Upper lobe of right lung (tissue), 1 donor: ENCODE measurements at regions of chr19 and their contacts with region 1.

Region 1: GRCh38 chr19:29610563-29611271 is 4.6 kb downstream of the POP4 start:
- DNase-seq: peak; percentile 81
- ATAC-seq: peak; percentile 83
- H3K4me3 ChIP-seq: no peak overlapping the region
- H3K27ac ChIP-seq: no peak overlapping the region
- H3K4me1 ChIP-seq: peaks cover 5% of the 10 kb centered on the region
- H3K27me3 ChIP-seq: no peaks in the 10 kb centered on the region
- CTCF ChIP-seq: peak; percentile 86

Region 2: DNA sequence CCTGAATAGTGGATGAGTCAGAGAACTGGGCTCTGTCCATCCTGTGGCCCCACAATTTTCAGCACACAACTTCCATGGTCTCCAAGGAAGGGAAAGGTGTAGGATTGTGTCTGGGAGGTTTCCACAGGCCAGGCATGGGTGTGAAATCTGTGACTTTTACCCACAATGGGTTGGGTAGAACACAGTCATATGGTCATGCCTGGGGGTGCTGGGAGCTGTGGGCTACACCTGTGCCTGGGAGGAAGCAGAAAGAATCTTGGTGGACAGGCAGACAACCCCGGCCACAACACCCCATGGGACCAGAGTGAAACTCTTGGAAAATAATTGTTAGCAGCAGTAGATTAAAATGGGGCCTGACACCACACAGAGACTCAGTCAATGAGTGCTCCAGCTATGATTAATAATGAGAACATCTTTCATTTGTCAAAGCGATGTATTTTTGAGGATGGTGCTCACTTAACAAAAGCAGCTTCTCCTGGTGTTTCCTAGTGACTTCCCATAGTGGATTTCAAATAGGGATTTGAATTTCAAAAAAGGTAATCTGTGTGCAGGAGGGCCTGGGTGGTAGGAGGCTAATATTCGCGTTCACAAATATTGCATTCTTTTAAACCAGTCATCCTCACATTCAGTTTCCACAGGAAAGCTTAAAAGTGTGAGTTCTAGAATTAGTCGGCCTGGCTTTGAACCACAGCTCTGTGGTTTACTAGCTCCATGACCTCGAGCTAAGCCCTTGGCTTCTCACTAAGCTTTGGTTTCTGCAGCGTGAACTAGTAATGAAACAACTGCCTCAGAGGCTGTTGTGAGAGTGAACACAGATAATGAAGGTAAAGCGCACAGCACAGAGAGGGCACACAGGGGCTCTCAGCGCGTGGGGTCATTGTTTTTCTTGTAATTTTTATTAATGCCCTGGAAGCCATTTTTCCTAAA is 308.5 kb before region 1 on chr19:
- intact Hi-C with region 1: no loop called
- DNase-seq: peak; percentile 8
- ATAC-seq: no peak
- H3K4me3 ChIP-seq: no peak overlapping the region
- H3K27ac ChIP-seq: no peak overlapping the region
- H3K4me1 ChIP-seq: no peaks in the 10 kb centered on the region
- H3K27me3 ChIP-seq: peaks cover 16% of the 10 kb centered on the region
- CTCF ChIP-seq: no peak

Region 3: DNA sequence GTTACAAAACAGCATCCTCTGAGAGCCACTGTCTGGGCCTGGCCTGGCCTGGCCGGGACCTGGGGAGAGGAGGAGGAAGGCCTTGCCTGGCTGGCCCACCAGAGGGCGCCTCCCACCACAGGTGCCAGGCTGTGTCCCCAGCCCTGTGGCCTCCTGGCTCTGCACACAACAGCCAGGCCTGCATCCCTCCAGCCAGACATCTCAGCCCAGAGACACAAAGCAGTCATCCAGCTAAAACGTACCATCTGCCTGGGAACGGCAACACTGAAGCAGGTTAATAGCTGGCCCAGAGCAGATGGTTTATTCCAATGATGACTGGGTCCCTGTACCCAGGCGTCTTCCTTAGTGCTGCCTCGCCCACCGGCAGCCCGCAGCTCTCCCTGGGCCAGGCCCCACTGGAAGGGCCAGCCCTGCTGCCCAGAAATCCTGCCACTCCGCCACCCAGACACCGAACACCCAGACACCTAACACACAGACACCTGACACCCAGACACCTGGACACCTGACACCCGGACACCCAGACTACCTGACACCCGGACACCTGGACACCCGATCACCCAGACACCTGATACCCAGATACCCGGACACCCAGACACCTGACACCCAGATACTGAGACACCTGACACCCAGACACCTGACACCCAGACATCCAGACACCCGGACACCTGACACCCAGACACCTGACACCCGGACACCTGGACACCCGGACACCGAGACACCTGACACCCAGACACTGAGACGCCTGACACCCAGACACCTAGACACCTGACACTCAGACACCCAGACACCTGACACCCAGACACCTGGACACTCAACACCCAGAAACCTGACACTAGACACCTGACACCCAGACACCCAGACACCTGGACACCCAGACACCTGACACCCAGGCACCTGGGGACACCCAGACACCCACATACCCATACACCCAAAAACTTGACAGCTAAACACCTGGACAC is 84.2 kb after region 1 on chr19:
- intact Hi-C with region 1: loop called (anchors 5 kb)
- DNase-seq: peak; percentile 89
- ATAC-seq: peak; percentile 98
- H3K4me3 ChIP-seq: no peak overlapping the region
- H3K27ac ChIP-seq: no peak overlapping the region
- H3K4me1 ChIP-seq: no peaks in the 10 kb centered on the region
- H3K27me3 ChIP-seq: no peaks in the 10 kb centered on the region
- CTCF ChIP-seq: peak; percentile 92